ENCODE measurements at regions of chr11 and their contacts with region 1.

Region 1: DNA sequence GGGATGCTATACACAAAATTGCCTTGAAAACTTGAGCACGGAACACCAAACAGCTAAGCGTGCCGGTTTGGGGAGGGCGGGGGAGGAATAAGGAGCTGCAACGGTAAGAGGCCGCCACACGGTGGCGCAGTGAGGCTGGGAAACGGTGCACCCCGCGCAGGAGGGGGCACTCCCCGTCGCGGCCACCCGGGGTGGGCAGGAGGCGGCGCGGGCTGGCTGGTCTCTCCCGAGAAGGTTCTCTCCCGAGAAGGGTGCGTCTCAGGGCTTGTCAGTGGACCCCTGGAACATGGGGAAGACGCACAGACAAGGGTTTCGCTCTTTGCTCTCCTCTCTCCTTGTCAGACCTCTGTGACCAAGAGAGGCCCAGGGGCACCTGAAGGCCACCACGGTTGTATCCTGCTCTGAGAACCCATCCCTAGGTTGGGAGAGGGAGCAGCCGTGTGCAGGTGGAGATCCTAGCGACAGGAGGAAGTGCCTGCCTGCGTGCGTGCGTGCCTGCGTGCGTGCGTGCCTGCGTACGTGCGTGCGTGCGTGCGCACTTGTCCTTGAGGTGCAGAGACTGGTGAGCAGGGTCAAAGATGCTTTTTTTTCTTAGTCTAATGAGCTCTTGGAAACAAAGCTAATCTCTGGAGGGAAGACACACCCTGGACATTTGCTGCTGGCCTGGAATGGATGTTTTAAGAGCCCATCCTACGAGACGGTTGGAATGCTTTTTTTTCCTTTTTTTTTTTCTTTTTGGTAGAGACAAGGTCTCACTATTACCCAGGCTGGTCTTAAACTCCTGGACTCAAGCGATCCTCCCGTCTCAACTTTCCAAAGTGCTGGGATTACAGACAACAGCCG is 18.1 kb upstream of the JAM3 start:
- DNase-seq: peak; percentile 70 to 88 (median 77)
- H3K4me3 ChIP-seq: peak overlapping the region in 56 of 59 donors; percentile 14 to 66 (median 44)
- H3K27ac ChIP-seq: peak overlapping the region in 38 of 59 donors; percentile 1 to 83 (median 56)
- H3K27me3 ChIP-seq: peaks cover 0 to 9% (median 0%) of the 10 kb centered on the region in 45 donors
- CTCF ChIP-seq: peak; percentile 77 to 98 (median 95)

Region 2: DNA sequence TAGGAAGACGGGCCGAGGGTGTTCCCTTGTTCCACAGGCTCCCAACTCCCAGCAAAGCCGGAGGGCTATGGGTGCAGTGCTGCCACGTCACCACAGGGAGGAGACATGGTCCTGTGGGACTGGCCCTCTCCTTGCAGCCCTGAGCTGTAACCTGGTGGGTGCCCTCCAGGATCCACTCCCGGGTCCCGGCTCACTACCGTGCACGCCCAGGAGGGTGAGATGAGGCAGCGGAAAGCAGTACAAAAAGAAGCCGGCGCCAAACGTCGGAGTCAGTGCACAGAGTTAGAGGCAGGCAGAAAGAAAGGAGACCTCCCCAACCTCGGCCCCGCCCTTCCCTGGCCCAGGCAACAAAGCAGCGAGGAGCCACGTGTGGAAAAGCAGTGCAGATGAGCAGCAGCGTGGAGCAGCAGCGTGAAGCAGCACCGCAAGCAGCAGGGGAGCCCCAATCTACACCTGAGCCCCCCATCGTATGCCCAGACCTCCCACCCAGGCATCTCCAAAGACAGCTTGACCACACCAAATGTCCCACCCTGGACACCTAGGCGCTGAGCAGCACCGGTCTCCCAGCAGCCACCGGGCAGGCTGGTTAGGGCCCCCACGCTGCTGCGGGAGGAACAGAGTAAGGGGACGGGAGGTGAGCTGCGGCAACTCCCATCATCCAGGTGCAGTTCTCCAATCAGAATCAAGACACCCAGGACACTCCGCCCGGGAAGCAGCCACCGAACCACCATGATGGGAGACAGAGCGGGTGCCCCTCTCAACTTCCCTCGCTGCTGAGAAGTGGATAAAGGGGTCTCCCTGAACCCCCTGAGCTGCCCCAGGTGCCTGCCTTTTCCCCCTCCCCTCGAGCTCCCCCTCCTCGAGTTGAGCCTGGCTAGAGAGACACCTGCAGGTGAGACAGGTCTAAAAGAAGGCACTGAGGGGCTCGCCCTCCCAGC is 122.8 kb before region 1 on chr11:
- intact Hi-C with region 1: loop called in 1 of 2 experiments (anchors 5 kb)
- DNase-seq: peak; percentile 60 to 85 (median 76)
- H3K4me3 ChIP-seq: peak overlapping the region in 1 of 59 donors; percentile 17
- H3K27ac ChIP-seq: peak overlapping the region in 5 of 59 donors; percentile 8 to 44 (median 34)
- H3K27me3 ChIP-seq: peaks cover 0 to 10% (median 0%) of the 10 kb centered on the region in 45 donors
- CTCF ChIP-seq: peak; percentile 33 to 89 (median 82)

Region 3: GRCh38 chr11:133978794-133979193 is 72.0 kb before region 1 on chr11:
- intact Hi-C with region 1: no loop called
- DNase-seq: no peak
- H3K4me3 ChIP-seq: no peak overlapping the region
- H3K27ac ChIP-seq: no peak overlapping the region
- H3K27me3 ChIP-seq: peaks cover 0 to 24% (median 0%) of the 10 kb centered on the region in 45 donors
- CTCF ChIP-seq: no peak

Region 4: GRCh38 chr11:134033696-134034491 is 16.9 kb before region 1 on chr11:
- intact Hi-C with region 1: loop called in 1 of 2 experiments (anchors 1 kb)
- DNase-seq: peak in 9 of 10 donors; percentile 67 to 91 (median 83)
- H3K4me3 ChIP-seq: peak overlapping the region in 57 of 59 donors; percentile 0 to 60 (median 41)
- H3K27ac ChIP-seq: peak overlapping the region; percentile 5 to 98 (median 86)
- H3K27me3 ChIP-seq: no peaks in the 10 kb centered on the region
- CTCF ChIP-seq: peak in 1 of 56 donors; percentile 6

Region 5: DNA sequence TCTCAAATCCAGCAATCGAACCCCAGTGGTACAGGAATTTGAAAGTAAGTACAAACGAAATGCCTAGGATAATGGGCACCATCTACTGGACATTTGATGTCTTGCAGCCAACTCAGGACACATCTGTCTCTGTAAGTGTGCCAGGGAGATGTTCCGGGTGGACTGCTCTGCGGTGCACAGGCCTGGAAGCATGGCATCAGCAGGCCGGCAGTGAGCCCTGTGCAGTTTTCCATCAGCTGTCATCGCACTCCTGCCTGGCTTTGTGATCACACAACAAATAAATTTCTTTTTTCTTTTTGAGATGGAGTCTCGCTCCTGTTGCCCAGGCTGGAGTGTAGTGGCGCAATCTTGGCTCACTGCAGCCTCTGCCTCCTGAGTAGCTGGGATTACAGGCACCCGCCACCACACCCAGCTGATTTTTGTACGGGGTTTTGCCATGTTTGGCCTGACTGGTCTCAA is 89.1 kb after region 1 on chr11:
- intact Hi-C with region 1: loop called (anchors 1 to 2 kb)
- DNase-seq: peak; percentile 47 to 90 (median 80)
- H3K4me3 ChIP-seq: peak overlapping the region in 7 of 59 donors; percentile 1 to 25 (median 21)
- H3K27ac ChIP-seq: peak overlapping the region in 56 of 59 donors; percentile 33 to 89 (median 79)
- H3K27me3 ChIP-seq: no peaks in the 10 kb centered on the region
- CTCF ChIP-seq: peak; percentile 70 to 97 (median 92)

Region 6: DNA sequence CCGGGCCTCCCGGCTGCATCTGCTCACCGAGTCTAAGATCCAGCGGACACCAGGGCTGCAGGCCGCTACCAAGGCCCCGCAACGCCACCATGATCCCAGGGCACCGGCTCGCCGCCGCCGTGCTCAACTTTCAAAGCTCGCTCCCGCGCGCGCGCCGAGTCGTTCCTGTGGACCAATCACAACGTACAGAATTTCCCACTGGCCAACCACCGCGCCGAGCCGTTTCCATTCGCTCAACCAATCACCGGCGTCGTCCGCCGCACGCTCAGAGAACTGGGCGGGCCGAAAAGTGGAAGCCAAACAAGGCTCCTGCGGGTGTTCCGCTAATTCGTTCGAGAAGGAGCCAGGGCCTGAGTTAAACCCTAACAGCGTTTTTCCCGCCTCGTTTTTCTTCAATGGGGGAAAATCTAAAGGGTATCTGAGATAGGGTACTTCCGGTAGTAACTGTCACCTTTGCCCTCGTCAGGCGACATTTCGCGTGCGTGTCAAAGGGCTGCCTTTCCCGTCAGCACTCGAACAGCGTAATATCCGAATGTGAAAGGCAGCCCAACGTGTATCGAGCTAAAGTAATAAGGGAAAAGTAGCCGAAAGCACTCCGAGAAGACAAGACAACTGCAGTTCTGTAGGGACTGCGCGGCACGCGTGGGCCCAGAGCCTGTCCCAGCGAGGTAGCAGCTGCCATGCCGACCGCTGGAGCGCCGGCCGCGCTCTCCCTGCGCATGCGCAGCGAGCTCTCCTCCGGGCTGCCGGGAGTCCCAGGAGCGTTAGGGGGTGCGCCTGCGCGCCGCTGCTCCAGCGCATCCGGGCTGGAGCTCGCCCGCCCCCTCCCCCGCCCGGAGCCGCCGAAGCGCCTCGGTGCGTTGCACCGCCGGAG is 173.3 kb after region 1 on chr11 and contains the starts of genes NCAPD3 and VPS26B:
- intact Hi-C with region 1: loop called in 1 of 2 experiments (anchors 10 kb)
- DNase-seq: peak; percentile 94 to 97 (median 96)
- H3K4me3 ChIP-seq: peak within 1 kb of the TSS; percentile 61 to 98 (median 88)
- H3K27ac ChIP-seq: peak within 1 kb of the TSS; percentile 76 to 100 (median 97)
- H3K27me3 ChIP-seq: no peaks in the 10 kb centered on the region
- CTCF ChIP-seq: peak in 23 of 56 donors; percentile 2 to 45 (median 18)
- total RNA-seq, gene NCAPD3: 13.4 to 32.0 (median 21.2) TPM
- total RNA-seq, gene VPS26B: 65.2 to 113 (median 90.6) TPM

Measured in dorsolateral prefrontal cortex (tissue), 120 donors.